ENCODE measurements at regions of chr15 and their contacts with region 1.

Region 1: GRCh38 chr15:51649659-51650521 is 27.3 kb upstream of the DMXL2 start:
- DNase-seq: peak; percentile 47 to 88 (median 56)
- ATAC-seq: peak; percentile 74
- H3K4me3 ChIP-seq: no peak overlapping the region
- H3K27ac ChIP-seq: no peak overlapping the region
- H3K4me1 ChIP-seq: peaks cover 18 to 40% of the 10 kb centered on the region in 2 experiments
- H3K27me3 ChIP-seq: no peaks in the 10 kb centered on the region
- CTCF ChIP-seq: peak; percentile 74 to 95 (median 77); a peak in 5 of 6 replicates
- EP300 ChIP-seq: no peak
- POLR2A ChIP-seq: no peak
- RAD21 ChIP-seq: peak; percentile 99 to 100

Region 2: DNA sequence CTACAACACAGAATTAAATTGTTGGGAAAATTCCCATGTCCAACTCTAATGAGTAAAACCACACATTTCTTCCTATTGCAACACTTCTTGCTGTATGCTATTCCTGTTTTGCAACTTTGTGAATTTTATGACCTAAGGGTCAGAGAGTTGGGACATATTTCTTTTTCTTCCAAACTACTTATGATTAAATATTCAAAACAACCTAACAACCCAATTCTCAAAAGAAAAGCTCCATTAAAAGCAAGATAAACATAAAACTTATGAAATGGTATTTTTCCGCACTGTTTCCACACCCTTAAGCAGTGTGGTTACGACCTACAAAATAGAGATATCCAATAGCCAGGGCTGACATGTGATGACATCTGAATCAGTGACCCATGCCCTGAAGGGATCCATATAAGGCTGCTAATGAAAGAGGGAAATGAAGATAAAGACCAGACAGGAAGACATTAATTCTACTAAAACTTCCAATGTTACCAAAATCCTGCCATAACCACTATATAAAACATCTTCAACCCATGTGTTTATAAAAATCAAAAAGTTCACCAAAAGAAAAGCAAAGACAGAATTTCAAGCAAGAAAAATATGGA is 72.9 kb before region 1 on chr15:
- CTCF ChIA-PET with region 1: no interaction called
- POLR2A ChIA-PET with region 1: no interaction called
- in situ Hi-C with region 1: no loop called
- intact Hi-C with region 1: loop called (anchors 1 kb)
- DNase-seq: peak in 2 of 4 experiments; percentile 48 to 59
- ATAC-seq: peak; percentile 78
- H3K4me3 ChIP-seq: no peak overlapping the region
- H3K27ac ChIP-seq: peak overlapping the region; percentile 34; the same call in 1 of the 3 replicates
- H3K4me1 ChIP-seq: peaks cover 4 to 47% of the 10 kb centered on the region in 2 experiments; a peak in 4 of 5 replicates
- H3K27me3 ChIP-seq: no peaks in the 10 kb centered on the region
- CTCF ChIP-seq: no peak
- EP300 ChIP-seq: no peak
- POLR2A ChIP-seq: no peak
- RAD21 ChIP-seq: no peak

Region 3: GRCh38 chr15:51688863-51689262 is 39.0 kb after region 1 on chr15:
- CTCF ChIA-PET with region 1: no interaction called
- POLR2A ChIA-PET with region 1: no interaction called
- in situ Hi-C with region 1: no loop called
- intact Hi-C with region 1: loop called (anchors 5 kb)
- DNase-seq: peak in 3 of 4 experiments; percentile 29 to 46 (median 38)
- ATAC-seq: peak; percentile 82
- H3K4me3 ChIP-seq: no peak overlapping the region
- H3K27ac ChIP-seq: no peak overlapping the region
- H3K4me1 ChIP-seq: peaks cover 3 to 13% of the 10 kb centered on the region in 2 experiments; a peak in 4 of 5 replicates
- H3K27me3 ChIP-seq: no peaks in the 10 kb centered on the region
- CTCF ChIP-seq: peak; percentile 24 to 49 (median 34); a peak in 2 of 6 replicates
- EP300 ChIP-seq: no peak
- POLR2A ChIP-seq: no peak
- RAD21 ChIP-seq: peak; percentile 16 to 49; a peak in 2 of 4 replicates

Region 4: DNA sequence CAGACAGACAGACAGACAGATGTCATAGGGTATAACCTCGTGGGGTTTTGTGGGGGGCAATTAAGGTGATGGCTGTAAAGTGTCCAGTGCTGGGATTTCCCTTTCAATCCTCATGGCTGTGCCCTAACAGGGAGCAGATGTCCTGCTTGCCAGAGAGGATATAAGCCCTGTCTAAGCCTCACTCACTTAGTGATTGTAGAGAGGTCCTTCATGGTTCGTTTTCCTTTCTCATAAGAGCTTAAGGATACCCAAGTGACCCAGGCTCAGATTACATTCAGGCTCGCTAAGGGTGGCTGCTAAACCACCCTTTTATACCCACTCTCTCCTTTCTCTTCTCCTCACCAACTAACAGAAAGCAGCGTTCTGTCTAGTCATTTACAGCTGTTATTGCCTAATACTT is 68.3 kb after region 1 on chr15:
- CTCF ChIA-PET with region 1: no interaction called
- POLR2A ChIA-PET with region 1: no interaction called
- in situ Hi-C with region 1: no loop called
- intact Hi-C with region 1: no loop called
- DNase-seq: no peak
- ATAC-seq: peak; percentile 36; the same call in 1 of the 3 replicates
- H3K4me3 ChIP-seq: no peak overlapping the region
- H3K27ac ChIP-seq: no peak overlapping the region
- H3K4me1 ChIP-seq: peaks cover 0 to 10% of the 10 kb centered on the region in 2 experiments; a peak in 2 of 5 replicates
- H3K27me3 ChIP-seq: no peaks in the 10 kb centered on the region
- CTCF ChIP-seq: no peak
- EP300 ChIP-seq: no peak
- POLR2A ChIP-seq: no peak
- RAD21 ChIP-seq: no peak

Region 5: GRCh38 chr15:51737280-51738017 is 87.6 kb after region 1 on chr15 and contains the start of gene LYSMD2:
- CTCF ChIA-PET with region 1: no interaction called
- POLR2A ChIA-PET with region 1: interaction called, 4 read pairs
- in situ Hi-C with region 1: no loop called
- intact Hi-C with region 1: loop called (anchors 2 kb)
- DNase-seq: peak; percentile 73 to 81 (median 76)
- ATAC-seq: peak; percentile 76
- H3K4me3 ChIP-seq: peak within 1 kb of the TSS; percentile 64
- H3K27ac ChIP-seq: peak within 1 kb of the TSS; percentile 63
- H3K4me1 ChIP-seq: peaks cover 21 to 41% of the 10 kb centered on the region in 2 experiments
- H3K27me3 ChIP-seq: no peaks in the 10 kb centered on the region
- CTCF ChIP-seq: no peak
- EP300 ChIP-seq: no peak
- POLR2A ChIP-seq: no peak
- RAD21 ChIP-seq: no peak
- polyA plus RNA-seq, gene LYSMD2: 4.3 to 4.8 TPM

Region 6: DNA sequence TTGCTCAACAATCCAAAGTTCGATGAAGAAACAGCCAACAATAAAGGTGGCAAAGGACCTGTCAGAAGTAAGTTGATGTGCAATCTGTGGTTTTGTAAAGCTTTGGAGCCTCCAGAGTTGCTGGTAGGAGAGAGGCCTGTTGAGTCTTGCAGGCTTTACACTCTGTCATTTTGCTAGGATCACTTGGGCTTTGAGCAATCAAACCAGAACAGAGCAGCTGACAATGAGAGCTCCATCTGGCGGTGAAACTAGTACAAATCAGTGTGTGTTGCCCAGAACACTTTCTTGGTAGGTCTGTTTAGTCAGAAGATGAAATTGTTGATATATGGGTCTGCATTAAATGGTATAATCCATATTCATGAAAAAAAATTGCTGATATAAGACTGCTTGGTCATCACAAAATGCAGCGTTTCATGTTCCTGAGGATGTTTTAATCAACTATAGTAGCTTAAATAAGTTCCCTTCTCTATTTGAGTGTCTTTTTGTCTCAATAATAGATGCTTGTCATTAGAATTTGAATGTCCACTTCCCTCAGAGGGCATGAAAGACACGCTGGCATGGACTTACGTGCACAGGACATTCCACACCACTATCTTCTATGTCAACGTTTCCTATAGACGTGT is 127.2 kb after region 1 on chr15:
- CTCF ChIA-PET with region 1: interaction called, 106 read pairs
- POLR2A ChIA-PET with region 1: interaction called, 12 read pairs
- in situ Hi-C with region 1: loop called (anchors 5 kb)
- intact Hi-C with region 1: loop called (anchors 1 kb)
- DNase-seq: peak; percentile 71 to 87 (median 75)
- ATAC-seq: peak; percentile 98
- H3K4me3 ChIP-seq: no peak overlapping the region
- H3K27ac ChIP-seq: no peak overlapping the region
- H3K4me1 ChIP-seq: peaks cover 0 to 2% of the 10 kb centered on the region in 2 experiments; a peak in 1 of 5 replicates
- H3K27me3 ChIP-seq: no peaks in the 10 kb centered on the region
- CTCF ChIP-seq: peak; percentile 74 to 81 (median 80)
- EP300 ChIP-seq: no peak
- POLR2A ChIP-seq: no peak
- RAD21 ChIP-seq: peak; percentile 76 to 81

Measured in K562 (cell line).